PC-9 (cell line): ENCODE measurements at regions of chr1 and their contacts with region 1.

Region 1: DNA sequence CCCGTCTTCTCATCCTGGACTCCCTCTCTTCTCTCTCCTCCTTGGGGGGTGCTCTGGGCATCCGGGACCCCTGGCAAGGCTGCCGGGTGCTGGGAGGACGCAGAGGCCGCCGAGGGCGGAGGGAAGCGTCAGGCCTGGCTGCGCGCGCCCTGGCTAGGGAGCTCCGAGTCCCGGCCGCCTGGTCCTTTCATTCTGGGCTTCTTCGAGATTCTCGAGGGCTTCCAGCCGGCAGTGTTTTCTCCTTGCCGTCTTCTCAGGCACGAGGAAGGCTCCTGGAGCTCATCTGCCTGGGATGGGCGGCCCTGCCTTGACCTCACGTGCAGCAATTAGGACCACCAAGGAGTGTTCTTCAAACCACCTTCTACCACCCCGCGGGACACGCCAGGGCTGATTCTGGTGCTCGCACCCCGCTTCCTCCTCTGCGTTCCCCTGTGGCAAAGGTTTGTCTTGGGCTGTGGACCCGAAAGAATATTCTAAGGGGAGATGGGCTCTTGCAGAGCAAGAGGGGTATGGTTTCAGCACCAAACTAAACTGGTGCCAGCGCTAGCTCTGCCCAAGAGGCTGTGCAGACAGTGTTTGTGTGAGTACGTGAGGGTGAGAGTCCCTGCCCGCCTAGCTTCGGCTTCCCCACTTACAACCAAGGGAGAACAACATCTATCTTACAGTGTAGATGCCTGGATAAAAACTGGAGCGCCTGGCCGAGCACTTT is 36.5 kb downstream of the PIK3CD start:
- DNase-seq: peak in 1 of 2 experiments; percentile 16
- H3K4me3 ChIP-seq: peak overlapping the region; percentile 57
- H3K27ac ChIP-seq: no peak overlapping the region
- H3K4me1 ChIP-seq: peaks cover 15% of the 10 kb centered on the region; the same call in 1 of the 2 replicates
- H3K27me3 ChIP-seq: no peaks in the 10 kb centered on the region
- CTCF ChIP-seq: no peak

Region 2: DNA sequence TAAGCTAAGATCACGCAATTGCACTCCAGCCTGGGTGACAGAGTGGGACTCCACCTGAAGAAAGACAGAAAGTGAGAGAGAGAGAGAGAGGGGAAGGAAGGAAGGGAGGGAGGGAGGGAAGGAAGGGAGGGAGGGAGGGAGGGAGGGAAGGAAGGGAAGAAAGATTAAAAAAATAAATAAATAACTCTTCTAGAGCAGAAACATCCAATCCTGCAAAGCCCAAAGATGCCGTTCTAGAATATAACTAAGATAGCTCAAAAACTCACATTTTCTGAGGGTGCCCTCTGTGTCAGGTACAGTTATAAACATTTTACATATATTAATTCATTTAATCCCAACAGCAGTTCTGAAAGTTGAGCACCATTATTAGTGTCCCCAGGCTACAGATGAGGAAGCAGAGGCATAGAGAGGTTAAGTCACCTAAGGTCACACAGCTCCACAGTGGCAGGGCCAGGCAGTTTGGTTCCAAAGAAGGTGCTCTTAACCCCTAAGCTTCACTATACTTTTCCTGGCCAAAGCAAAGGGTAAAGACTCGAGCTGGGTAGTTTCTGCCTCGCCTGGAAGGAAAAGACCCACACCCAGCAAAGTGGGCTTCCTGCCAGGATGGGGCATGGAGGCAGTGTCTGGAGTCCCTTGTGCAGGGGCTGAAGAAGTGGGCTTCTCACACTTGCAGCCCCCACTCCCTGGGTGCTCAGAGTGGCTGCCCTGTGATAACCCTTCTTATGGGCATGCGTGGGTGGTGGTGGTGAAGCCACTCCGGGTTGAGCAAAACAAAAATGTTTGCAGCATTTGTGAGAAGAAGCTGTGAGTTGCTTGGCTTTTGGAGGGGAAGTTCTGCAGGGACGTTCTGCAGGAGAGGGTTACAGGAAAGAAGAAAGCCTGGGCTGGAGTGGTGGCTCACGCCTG is 44.4 kb before region 1 on chr1:
- CTCF ChIA-PET with region 1: no interaction called
- POLR2A ChIA-PET with region 1: interaction called, 12 read pairs
- intact Hi-C with region 1: no loop called
- DNase-seq: no peak
- H3K4me3 ChIP-seq: no peak overlapping the region
- H3K27ac ChIP-seq: no peak overlapping the region
- H3K4me1 ChIP-seq: peaks cover 9% of the 10 kb centered on the region; the same call in 1 of the 2 replicates
- H3K27me3 ChIP-seq: no peaks in the 10 kb centered on the region
- CTCF ChIP-seq: no peak

Region 3: DNA sequence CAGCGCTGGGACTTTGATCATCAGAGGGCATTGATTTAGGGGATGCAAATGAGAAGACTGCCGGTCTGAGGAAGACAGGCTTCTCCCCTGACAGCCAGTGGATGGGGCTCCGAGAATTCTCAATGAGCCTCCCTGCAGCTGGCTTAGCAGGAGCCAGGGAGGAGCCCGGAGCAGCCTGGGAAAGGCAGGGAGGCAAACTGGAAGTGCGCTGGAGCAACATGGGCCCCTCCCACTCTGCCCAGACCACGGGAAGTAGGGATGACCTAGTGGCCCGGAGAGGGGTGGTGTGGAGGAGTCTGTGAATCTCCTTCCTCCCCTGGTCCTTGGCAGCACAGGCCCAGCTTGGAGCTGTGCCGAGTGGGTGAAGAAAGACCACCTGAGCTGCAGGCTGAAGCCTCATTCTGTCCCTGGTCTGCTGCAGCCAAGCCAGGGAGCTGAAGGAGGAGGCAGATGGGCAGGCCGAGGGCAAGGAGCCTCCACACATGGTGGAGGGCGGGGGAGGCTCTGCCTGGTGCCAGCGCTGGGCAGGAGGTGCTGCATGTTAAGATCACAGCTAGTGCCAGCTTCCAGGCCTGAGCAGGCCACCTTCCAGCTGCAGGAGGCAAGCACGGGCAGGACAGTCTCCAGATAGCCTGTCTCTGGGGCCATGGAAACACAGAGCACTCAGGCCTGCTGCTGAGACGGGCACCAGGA is 147.9 kb after region 1 on chr1:
- CTCF ChIA-PET with region 1: no interaction called
- POLR2A ChIA-PET with region 1: interaction called, 10 read pairs
- intact Hi-C with region 1: no loop called
- DNase-seq: peak in 1 of 2 experiments; percentile 50
- H3K4me3 ChIP-seq: no peak overlapping the region
- H3K27ac ChIP-seq: peak overlapping the region; percentile 56
- H3K4me1 ChIP-seq: peaks cover 22% of the 10 kb centered on the region
- H3K27me3 ChIP-seq: no peaks in the 10 kb centered on the region
- CTCF ChIP-seq: no peak